IMR-90 (cell line): ENCODE measurements at regions of chr17 and their contacts with region 1.

Region 1: GRCh38 chr17:3723556-3724369 is at the start of gene HASPIN:
- DNase-seq: peak; percentile 84
- ATAC-seq: peak; percentile 81
- H3K4me3 ChIP-seq: peak within 1 kb of the TSS; percentile 94
- H3K27ac ChIP-seq: peak within 1 kb of the TSS; percentile 98
- H3K4me1 ChIP-seq: peaks cover 19% of the 10 kb centered on the region
- H3K27me3 ChIP-seq: no peaks in the 10 kb centered on the region
- CTCF ChIP-seq: peak; percentile 19; the same call in 1 of the 2 replicates
- POLR2A ChIP-seq: no peak; the same call in 1 of the 2 replicates
- RAD21 ChIP-seq: no peak
- total RNA-seq, gene HASPIN: 3.9 and 4.3 TPM in 2 replicates

Region 2: DNA sequence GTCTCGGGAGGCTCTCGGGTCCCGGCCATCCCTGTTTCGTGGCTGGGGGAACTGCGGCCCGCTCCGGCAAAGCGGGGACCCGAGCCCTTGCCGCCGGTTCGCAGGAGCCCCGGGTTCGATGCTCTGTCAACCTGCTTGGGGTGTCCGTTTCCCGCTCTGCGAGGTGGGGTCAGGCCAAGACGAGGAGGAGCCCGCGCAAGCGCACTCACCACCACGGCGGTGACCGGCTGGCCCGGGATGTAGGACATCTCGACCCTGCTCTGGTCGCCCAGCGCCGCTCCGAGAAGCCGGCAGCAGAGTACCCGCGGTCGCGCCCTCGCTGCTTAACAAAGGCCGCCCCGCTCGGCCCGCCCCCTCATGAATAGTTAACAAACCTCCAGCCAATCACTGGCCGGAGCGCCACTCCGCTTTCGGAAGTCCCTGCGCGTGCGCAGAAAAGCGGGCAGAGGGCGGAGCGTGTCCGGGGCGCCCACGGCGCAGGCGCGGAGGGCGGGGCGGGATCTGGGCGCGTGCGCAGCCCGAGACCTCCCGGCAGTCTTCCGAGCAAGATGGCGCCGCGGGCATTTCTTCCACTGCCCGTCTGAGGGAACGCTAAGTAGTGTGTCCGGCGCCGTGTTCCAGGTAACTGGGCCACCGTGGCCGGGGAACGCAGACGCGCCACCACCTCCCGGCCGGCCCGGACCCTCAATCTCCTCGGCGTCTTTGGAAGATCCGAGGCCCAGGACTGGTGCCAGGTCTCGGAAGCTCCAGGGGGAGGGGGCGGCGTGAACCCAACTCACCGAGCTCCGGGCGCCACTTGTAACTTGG is 55.3 kb before region 1 on chr17 and contains the starts of genes EMC6 and TAX1BP3:
- CTCF ChIA-PET with region 1: no interaction called
- POLR2A ChIA-PET with region 1: no interaction called
- dilution Hi-C with region 1: no loop called
- in situ Hi-C with region 1: no loop called
- intact Hi-C with region 1: loop called (anchors 5 kb)
- DNase-seq: peak; percentile 96
- ATAC-seq: peak; percentile 89
- H3K4me3 ChIP-seq: peak within 1 kb of the TSS; percentile 71
- H3K27ac ChIP-seq: peak within 1 kb of the TSS; percentile 93
- H3K4me1 ChIP-seq: peaks cover 10% of the 10 kb centered on the region
- H3K27me3 ChIP-seq: no peaks in the 10 kb centered on the region
- CTCF ChIP-seq: no peak
- POLR2A ChIP-seq: peak; percentile 99
- RAD21 ChIP-seq: no peak
- total RNA-seq, gene EMC6: 10.8 and 10.9 TPM in 2 replicates
- total RNA-seq, gene TAX1BP3: 146 and 170 TPM in 2 replicates

Region 3: GRCh38 chr17:3683054-3683511 is 40.7 kb before region 1 on chr17:
- CTCF ChIA-PET with region 1: interaction called, 4 read pairs
- POLR2A ChIA-PET with region 1: no interaction called
- dilution Hi-C with region 1: no loop called
- in situ Hi-C with region 1: no loop called
- intact Hi-C with region 1: loop called (anchors 5 kb)
- DNase-seq: no peak
- ATAC-seq: peak; percentile 94
- H3K4me3 ChIP-seq: no peak overlapping the region
- H3K27ac ChIP-seq: no peak overlapping the region
- H3K4me1 ChIP-seq: no peaks in the 10 kb centered on the region
- H3K27me3 ChIP-seq: peaks cover 11% of the 10 kb centered on the region
- CTCF ChIP-seq: peak; percentile 80
- POLR2A ChIP-seq: no peak
- RAD21 ChIP-seq: peak; percentile 69